Gastrocnemius medialis (tissue), 4 donors: ENCODE measurements at regions of chr12 and their contacts with region 1.

Region 1: DNA sequence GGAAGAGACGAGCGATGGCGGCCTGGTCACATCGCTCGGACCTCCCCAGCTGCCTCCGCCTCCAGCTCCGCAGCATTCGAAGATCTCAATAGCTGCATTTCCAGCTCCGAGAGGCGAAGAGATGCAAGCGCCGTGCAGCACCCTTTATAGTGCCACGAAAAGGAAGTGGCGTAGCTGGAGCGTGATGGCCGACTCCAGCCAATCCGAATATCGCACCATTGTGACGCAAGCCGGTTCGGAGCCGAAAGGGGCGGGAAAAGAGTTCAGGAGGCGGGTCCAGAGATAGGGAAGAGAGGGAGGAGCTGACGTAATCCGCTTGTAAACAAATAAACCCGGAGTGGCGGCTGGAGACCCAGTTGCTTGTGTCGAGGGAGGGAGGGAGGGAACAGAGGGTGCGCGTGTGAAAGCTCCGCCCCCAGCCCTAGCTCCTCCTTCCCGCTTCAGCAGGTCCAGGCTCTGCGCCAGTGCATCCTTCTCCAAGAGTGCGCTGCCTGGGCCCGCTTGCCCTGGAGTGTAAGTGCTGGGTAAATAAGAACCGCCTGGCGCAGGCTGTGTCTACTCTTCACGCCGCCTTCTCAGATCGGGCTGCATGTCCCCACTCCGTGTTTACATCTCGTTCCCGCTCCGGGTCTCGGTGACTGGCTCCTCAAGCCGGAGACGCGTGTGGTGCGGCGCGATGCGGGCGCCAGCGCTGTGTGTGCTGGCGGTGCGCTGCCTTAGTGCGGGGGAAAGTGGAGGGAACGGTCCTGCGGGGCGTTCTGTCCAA is at the start of gene BTG1:
- DNase-seq: peak; percentile 100
- ATAC-seq: peak; percentile 93 to 94
- H3K4me3 ChIP-seq: peak within 1 kb of the TSS; percentile 89 to 98 (median 94)
- H3K27ac ChIP-seq: peak within 1 kb of the TSS; percentile 97 to 99 (median 98)
- H3K4me1 ChIP-seq: peaks cover 24 to 28% of the 10 kb centered on the region in 2 donors
- H3K27me3 ChIP-seq: no peaks in the 10 kb centered on the region
- CTCF ChIP-seq: peak in 1 of 5 experiments; percentile 16
- POLR2A ChIP-seq: peak; percentile 98 to 99
- total RNA-seq, gene BTG1: 12.5 to 33.1 (median 16.5) TPM

Region 2: DNA sequence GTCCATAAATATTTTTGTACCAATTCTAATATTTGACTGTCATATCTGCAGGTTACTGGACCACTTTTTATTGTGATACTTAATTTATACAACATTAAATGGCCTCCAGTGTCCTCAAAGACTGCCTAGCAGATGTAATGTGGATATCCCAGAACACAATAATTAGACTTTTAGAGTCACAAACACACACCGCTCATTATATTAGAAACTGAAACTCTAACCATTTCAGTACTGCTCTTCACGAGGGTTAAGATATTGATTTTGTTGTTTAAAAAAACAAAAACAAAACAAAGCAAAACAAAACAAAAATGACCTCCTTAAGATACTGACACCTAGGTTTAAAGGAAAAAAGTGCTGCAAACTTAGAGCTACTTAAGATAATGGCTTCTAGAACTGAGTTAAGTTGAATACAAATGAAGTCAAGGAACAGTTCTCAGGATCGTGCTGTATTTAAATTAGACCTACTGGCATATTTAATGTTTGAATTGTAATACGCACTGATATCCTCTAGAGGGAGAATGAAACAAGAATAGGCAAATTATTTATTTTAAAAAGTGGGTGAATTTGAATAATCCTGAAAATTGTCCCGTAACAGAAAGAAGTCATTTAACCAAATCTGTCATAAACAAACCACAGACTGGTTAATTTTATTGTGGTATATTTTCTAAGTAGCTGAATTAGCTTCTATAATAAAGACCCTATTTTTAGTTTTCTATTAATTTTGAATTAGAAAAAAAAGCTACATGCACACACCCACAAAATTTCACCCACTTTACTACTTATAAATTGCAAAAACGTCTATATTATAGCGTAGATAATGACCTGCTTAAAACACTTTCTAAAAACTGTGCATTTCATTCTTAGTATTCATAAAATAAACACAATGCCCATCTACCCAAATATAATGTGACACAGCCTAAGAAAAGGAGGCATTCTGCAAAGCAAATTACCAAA is 568.1 kb before region 1 on chr12:
- in situ Hi-C with region 1: no loop called
- intact Hi-C with region 1: loop called (anchors 10 kb)
- DNase-seq: no peak
- ATAC-seq: no peak
- H3K4me3 ChIP-seq: peak overlapping the region; percentile 19 to 52 (median 27)
- H3K27ac ChIP-seq: peak overlapping the region in 2 of 4 donors; percentile 5 to 36
- H3K4me1 ChIP-seq: peaks cover 9 to 10% of the 10 kb centered on the region in 2 donors
- H3K27me3 ChIP-seq: no peaks in the 10 kb centered on the region
- CTCF ChIP-seq: peak; percentile 31 to 65 (median 53)
- POLR2A ChIP-seq: no peak

Region 3: DNA sequence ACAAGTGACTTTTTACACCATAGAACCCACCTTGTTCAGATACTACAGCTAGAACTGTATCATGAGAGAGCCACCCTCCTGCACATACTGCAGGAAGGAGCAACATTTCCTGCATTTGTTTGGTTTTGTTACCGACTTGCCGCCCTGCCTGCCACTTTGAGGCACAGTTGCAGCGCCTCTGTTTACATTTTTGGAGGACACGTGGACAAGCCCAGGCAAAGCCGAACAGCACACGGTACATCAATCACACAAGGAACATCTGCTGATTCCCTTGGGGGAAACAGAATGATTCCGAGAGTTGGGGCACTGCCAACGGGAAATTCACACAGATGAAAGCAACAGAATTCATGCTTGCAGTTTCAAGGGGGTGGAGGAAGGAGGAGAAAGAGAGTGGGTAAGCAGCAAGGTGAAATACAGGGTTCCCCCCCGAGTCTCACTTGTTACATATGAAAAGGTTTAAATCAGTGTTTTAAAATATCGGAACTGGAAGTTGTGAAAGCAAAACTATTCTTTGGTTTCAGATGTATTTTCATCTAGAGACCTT is 111.0 kb before region 1 on chr12:
- in situ Hi-C with region 1: no loop called
- intact Hi-C with region 1: loop called (anchors 5 kb)
- DNase-seq: peak; percentile 23 to 35
- ATAC-seq: peak; percentile 17 to 31
- H3K4me3 ChIP-seq: peak overlapping the region; percentile 22 to 36 (median 26)
- H3K27ac ChIP-seq: peak overlapping the region; percentile 26 to 58 (median 46)
- H3K4me1 ChIP-seq: peaks cover 19 to 27% of the 10 kb centered on the region in 2 donors
- H3K27me3 ChIP-seq: no peaks in the 10 kb centered on the region
- CTCF ChIP-seq: no peak
- POLR2A ChIP-seq: no peak

Region 4: GRCh38 chr12:92096346-92097136 is 49.4 kb before region 1 on chr12:
- in situ Hi-C with region 1: no loop called
- intact Hi-C with region 1: no loop called
- DNase-seq: no peak
- ATAC-seq: no peak
- H3K4me3 ChIP-seq: no peak overlapping the region
- H3K27ac ChIP-seq: no peak overlapping the region
- H3K4me1 ChIP-seq: no peaks in the 10 kb centered on the region
- H3K27me3 ChIP-seq: no peaks in the 10 kb centered on the region
- CTCF ChIP-seq: no peak
- POLR2A ChIP-seq: no peak

Region 5: DNA sequence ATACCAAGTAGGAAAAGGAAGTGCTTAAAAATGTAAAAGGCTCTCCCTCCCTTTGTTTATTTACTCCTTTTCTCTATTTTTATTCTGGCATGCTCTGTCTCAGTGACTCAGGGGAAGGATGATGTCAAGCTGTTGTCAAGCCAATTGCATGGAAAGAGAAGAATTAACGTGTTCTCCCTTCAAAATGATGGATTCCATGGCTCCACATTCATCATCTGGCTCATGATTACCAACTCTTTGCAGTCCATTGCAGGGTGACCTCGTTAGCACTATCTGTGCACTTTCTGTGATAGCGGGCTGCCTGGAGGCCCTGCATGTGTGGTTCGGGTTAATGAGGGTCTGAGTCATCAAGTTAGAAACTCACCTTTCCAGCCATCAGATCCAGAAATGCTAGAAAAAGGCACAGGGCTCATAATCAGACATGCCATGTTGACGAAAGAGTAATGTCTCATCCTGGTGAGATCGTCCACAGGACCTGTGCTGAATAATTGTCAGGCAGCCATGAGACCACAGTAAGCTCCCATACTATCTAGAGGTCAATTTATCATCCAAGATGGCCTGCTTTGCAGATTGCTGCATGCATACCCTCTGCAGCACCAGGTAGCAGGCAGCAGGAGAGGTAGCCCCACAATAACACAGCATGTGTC is 78.9 kb after region 1 on chr12:
- in situ Hi-C with region 1: no loop called
- intact Hi-C with region 1: loop called (anchors 5 kb)
- DNase-seq: no peak
- ATAC-seq: no peak
- H3K4me3 ChIP-seq: no peak overlapping the region
- H3K27ac ChIP-seq: no peak overlapping the region
- H3K4me1 ChIP-seq: no peaks in the 10 kb centered on the region
- H3K27me3 ChIP-seq: no peaks in the 10 kb centered on the region
- CTCF ChIP-seq: no peak
- POLR2A ChIP-seq: no peak

Region 6: GRCh38 chr12:92466391-92467305 is 320.7 kb after region 1 on chr12:
- in situ Hi-C with region 1: no loop called
- intact Hi-C with region 1: loop called (anchors 10 kb)
- DNase-seq: peak; percentile 61 to 65
- ATAC-seq: peak; percentile 77 to 78
- H3K4me3 ChIP-seq: peak overlapping the region; percentile 16 to 42 (median 28)
- H3K27ac ChIP-seq: peak overlapping the region; percentile 68 to 87 (median 78)
- H3K4me1 ChIP-seq: peaks cover 47 to 80% of the 10 kb centered on the region in 2 donors
- H3K27me3 ChIP-seq: no peaks in the 10 kb centered on the region
- CTCF ChIP-seq: no peak
- POLR2A ChIP-seq: peak in 1 of 2 donors; percentile 29

Region 7: GRCh38 chr12:92570056-92570753 is 424.3 kb after region 1 on chr12:
- in situ Hi-C with region 1: loop called (anchors 5 to 25 kb)
- intact Hi-C with region 1: loop called (anchors 5 kb)
- DNase-seq: peak; percentile 28 to 34
- ATAC-seq: peak; percentile 58 to 73
- H3K4me3 ChIP-seq: peak overlapping the region in 1 of 4 donors; percentile 6
- H3K27ac ChIP-seq: peak overlapping the region in 3 of 4 donors; percentile 5 to 20 (median 10)
- H3K4me1 ChIP-seq: peaks cover 9 to 17% of the 10 kb centered on the region in 2 donors
- H3K27me3 ChIP-seq: no peaks in the 10 kb centered on the region
- CTCF ChIP-seq: peak; percentile 56 to 81 (median 77)
- POLR2A ChIP-seq: no peak